CD8-positive, alpha-beta T cell (primary cell): ENCODE measurements at regions of chr20 and their contacts with region 1.

Region 1: DNA sequence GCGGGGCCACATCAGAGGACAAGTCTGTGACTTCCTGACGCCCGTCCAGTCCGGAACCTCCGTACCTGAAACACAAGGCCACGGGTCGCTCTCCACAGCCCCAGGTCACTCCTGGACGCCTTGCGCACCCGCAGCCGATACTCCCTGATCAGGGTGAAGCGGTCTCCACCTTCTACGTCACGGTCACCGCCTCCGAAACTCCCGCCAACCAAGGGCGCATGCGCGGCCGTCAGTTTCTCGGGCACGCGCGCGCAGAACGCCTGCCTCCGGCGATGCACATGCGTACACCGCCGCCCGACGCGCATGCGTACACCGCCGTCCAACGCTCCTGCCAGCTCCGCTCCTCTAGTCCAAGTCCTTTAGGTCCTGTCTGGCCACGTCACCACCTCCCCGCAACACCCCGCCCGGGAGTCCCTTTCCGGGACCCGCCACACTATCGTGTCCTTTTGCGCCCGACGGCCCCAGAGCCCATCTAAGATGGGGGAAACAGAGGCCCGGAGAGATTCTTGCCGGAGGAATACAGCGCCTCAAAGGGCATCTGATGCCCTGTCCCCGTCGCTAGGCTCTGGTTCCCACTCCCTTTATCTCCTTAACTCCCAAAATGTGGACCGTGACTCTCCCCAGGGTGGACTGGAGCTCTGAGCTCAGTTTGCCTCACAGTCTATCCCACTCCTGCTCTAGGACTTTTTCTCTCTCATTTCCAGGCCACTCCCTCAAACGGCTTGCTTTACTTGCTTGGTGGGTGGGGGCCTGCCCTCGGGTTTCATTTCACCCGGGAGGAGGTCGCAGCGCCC is at the start of gene DSN1:
- DNase-seq: peak; percentile 94 to 99 (median 98)
- ATAC-seq: peak; percentile 82
- H3K4me3 ChIP-seq: peak within 1 kb of the TSS; percentile 74 to 80
- H3K4me3 Mint-ChIP-seq: peak within 1 kb of the TSS; percentile 99
- H3K27ac ChIP-seq: peak within 1 kb of the TSS; percentile 66 to 92
- H3K27ac Mint-ChIP-seq: peak within 1 kb of the TSS; percentile 95
- H3K4me1 ChIP-seq: peaks cover 8% of the 10 kb centered on the region
- H3K4me1 Mint-ChIP-seq: peaks cover 11% of the 10 kb centered on the region
- H3K27me3 ChIP-seq: no peaks in the 10 kb centered on the region
- H3K27me3 Mint-ChIP-seq: no peaks in the 10 kb centered on the region
- CTCF ChIP-seq: no peak
- total RNA-seq, gene DSN1: 12.2 to 13.1 TPM

Region 2: GRCh38 chr20:35541783-35542588 is 1231.8 kb before region 1 on chr20 and contains the start of gene ERGIC3:
- CTCF ChIA-PET with region 1: no interaction called
- POLR2A ChIA-PET with region 1: no interaction called
- intact Hi-C with region 1: loop called in 1 of 2 experiments (anchors 5 kb)
- DNase-seq: peak; percentile 93 to 98 (median 97)
- ATAC-seq: peak; percentile 97
- H3K4me3 ChIP-seq: peak within 1 kb of the TSS; percentile 81 to 94
- H3K4me3 Mint-ChIP-seq: peak within 1 kb of the TSS; percentile 89
- H3K27ac ChIP-seq: peak within 1 kb of the TSS; percentile 71 to 86
- H3K27ac Mint-ChIP-seq: peak within 1 kb of the TSS; percentile 89
- H3K4me1 ChIP-seq: peaks cover 14% of the 10 kb centered on the region
- H3K4me1 Mint-ChIP-seq: peaks cover 27% of the 10 kb centered on the region
- H3K27me3 ChIP-seq: no peaks in the 10 kb centered on the region
- H3K27me3 Mint-ChIP-seq: no peaks in the 10 kb centered on the region
- CTCF ChIP-seq: no peak
- total RNA-seq, gene ERGIC3: 149 TPM

Region 3: DNA sequence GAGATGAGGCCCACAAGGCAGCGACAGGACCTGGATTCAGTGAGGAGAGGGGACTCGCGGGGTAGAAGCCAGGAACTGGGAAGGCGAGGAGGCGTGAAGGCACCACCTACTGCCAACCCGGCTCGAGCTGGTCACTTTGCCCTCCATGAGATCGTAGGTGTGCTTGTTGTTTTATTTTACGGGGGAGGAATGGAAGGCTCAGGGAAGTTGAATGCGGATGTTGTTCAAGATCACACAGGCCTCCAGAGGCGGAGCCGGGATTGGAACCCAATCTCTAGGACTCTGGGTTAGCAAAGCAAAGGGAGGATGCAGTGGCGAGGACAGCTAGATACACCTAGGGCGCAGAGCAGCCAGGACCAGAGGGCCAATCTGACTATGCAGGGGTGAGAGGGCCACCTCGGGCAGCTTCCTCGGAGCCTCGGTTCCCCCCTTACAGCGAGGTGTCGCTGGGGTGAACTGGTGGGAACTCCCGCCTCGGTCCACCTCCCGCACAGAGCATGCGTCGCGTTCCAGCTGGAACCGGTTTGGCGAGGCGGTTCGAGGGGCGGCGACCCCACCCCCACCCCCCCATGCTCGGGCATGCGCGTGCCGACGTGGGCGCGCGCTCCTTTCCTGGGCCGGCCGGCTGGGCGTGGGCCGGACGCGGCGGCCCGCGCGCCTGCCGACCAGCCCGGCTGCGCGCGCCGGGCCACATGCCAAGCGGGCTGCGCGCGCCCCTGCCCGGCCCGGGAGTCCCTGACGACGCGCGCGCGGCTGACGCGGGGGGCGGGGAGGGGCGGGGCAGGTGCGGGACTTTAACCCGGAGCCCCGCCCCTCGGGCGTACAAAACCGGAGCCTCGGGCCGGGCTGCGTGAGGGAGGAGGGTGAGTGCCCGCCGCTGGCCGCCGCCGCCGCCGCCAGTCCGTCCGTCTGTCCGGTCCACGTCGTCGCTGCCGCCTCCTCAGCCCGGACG is 312.9 kb before region 1 on chr20:
- CTCF ChIA-PET with region 1: no interaction called
- POLR2A ChIA-PET with region 1: no interaction called
- intact Hi-C with region 1: loop called (anchors 1 kb)
- DNase-seq: peak; percentile 78 to 97 (median 89)
- ATAC-seq: peak; percentile 83
- H3K4me3 ChIP-seq: peak overlapping the region; percentile 47 to 52
- H3K4me3 Mint-ChIP-seq: peak overlapping the region; percentile 80
- H3K27ac ChIP-seq: peak overlapping the region; percentile 69 to 90
- H3K27ac Mint-ChIP-seq: peak overlapping the region; percentile 89
- H3K4me1 ChIP-seq: peaks cover 45% of the 10 kb centered on the region
- H3K4me1 Mint-ChIP-seq: peaks cover 44% of the 10 kb centered on the region
- H3K27me3 ChIP-seq: no peaks in the 10 kb centered on the region
- H3K27me3 Mint-ChIP-seq: no peaks in the 10 kb centered on the region
- CTCF ChIP-seq: no peak

Region 4: DNA sequence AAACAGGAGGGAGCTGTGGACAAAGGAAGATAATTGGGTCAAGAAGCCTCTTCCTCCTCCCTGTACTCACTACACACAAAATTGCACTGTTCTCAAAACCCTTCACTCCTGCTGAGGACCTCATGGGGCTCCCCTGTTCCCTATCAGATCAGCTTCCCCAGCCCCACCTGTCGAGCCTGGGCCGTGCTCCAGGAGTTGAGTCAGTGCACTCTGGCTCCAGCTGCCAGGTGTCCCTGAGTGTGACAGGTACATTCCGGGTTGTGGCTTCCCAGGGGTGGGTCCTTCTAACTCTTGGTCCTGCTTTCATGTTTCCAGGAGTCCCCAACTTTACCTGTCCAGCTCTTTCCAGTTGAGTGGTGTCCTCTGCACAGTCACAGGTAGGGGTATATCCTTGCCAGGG is 159.8 kb before region 1 on chr20:
- CTCF ChIA-PET with region 1: interaction called, 3 read pairs
- POLR2A ChIA-PET with region 1: no interaction called
- intact Hi-C with region 1: loop called in 1 of 2 experiments (anchors 2 kb)
- DNase-seq: no peak
- ATAC-seq: no peak
- H3K4me3 ChIP-seq: no peak overlapping the region
- H3K4me3 Mint-ChIP-seq: no peak overlapping the region
- H3K27ac ChIP-seq: no peak overlapping the region
- H3K27ac Mint-ChIP-seq: peak overlapping the region; percentile 55
- H3K4me1 ChIP-seq: no peaks in the 10 kb centered on the region
- H3K4me1 Mint-ChIP-seq: peaks cover 16% of the 10 kb centered on the region
- H3K27me3 ChIP-seq: no peaks in the 10 kb centered on the region
- H3K27me3 Mint-ChIP-seq: no peaks in the 10 kb centered on the region
- CTCF ChIP-seq: no peak

Region 5: DNA sequence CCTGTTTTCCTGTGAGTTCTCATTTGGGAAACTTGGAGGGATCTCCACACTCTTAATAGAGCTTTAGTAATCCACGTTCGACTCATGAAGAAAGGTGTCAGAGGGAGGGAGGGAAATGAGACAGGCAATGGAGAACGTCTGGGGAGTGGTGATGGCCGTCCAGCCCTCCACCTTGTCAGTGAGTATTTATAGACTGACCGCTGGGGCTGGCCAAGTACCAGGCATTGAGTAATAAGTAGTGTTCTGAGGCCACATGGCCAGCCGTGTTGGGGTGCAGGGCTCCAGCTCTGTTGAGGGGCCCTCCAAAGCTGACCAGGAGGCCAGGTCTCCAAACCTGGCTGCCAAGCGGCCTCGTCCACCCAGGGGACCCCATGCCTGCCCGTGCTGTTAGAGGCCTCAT is 11.1 kb after region 1 on chr20:
- CTCF ChIA-PET with region 1: no interaction called
- POLR2A ChIA-PET with region 1: no interaction called
- intact Hi-C with region 1: no loop called
- DNase-seq: no peak
- ATAC-seq: no peak
- H3K4me3 ChIP-seq: no peak overlapping the region
- H3K4me3 Mint-ChIP-seq: no peak overlapping the region
- H3K27ac ChIP-seq: no peak overlapping the region
- H3K27ac Mint-ChIP-seq: no peak overlapping the region
- H3K4me1 ChIP-seq: no peaks in the 10 kb centered on the region
- H3K4me1 Mint-ChIP-seq: no peaks in the 10 kb centered on the region
- H3K27me3 ChIP-seq: no peaks in the 10 kb centered on the region
- H3K27me3 Mint-ChIP-seq: no peaks in the 10 kb centered on the region
- CTCF ChIP-seq: no peak

Region 6: GRCh38 chr20:36796117-36796516 is 22.3 kb after region 1 on chr20:
- CTCF ChIA-PET with region 1: no interaction called
- POLR2A ChIA-PET with region 1: no interaction called
- intact Hi-C with region 1: no loop called
- DNase-seq: no peak
- ATAC-seq: no peak
- H3K4me3 ChIP-seq: no peak overlapping the region
- H3K4me3 Mint-ChIP-seq: no peak overlapping the region
- H3K27ac ChIP-seq: no peak overlapping the region
- H3K27ac Mint-ChIP-seq: no peak overlapping the region
- H3K4me1 ChIP-seq: no peaks in the 10 kb centered on the region
- H3K4me1 Mint-ChIP-seq: no peaks in the 10 kb centered on the region
- H3K27me3 ChIP-seq: no peaks in the 10 kb centered on the region
- H3K27me3 Mint-ChIP-seq: no peaks in the 10 kb centered on the region
- CTCF ChIP-seq: no peak

Region 7: GRCh38 chr20:36862857-36863668 is 89.3 kb after region 1 on chr20:
- CTCF ChIA-PET with region 1: interaction called, 3 read pairs
- POLR2A ChIA-PET with region 1: no interaction called
- intact Hi-C with region 1: loop called in 1 of 2 experiments (anchors 1 kb)
- DNase-seq: peak in 1 of 9 experiments; percentile 51
- ATAC-seq: peak; percentile 66
- H3K4me3 ChIP-seq: no peak overlapping the region
- H3K4me3 Mint-ChIP-seq: no peak overlapping the region
- H3K27ac ChIP-seq: no peak overlapping the region
- H3K27ac Mint-ChIP-seq: no peak overlapping the region
- H3K4me1 ChIP-seq: peaks cover 3% of the 10 kb centered on the region
- H3K4me1 Mint-ChIP-seq: peaks cover 5% of the 10 kb centered on the region
- H3K27me3 ChIP-seq: peaks cover 0 to 7% of the 10 kb centered on the region in 2 experiments
- H3K27me3 Mint-ChIP-seq: peaks cover 2% of the 10 kb centered on the region
- CTCF ChIP-seq: no peak